ENCODE measurements at regions of chr17 and their contacts with region 1.

Region 1: GRCh38 chr17:43673516-43674323 is 12.0 kb upstream of the MEOX1 start:
- DNase-seq: peak; percentile 76
- H3K4me3 ChIP-seq: no peak overlapping the region
- H3K27ac ChIP-seq: no peak overlapping the region
- H3K4me1 ChIP-seq: peaks cover 21% of the 10 kb centered on the region
- H3K27me3 ChIP-seq: no peaks in the 10 kb centered on the region
- CTCF ChIP-seq: peak; percentile 98

Region 2: DNA sequence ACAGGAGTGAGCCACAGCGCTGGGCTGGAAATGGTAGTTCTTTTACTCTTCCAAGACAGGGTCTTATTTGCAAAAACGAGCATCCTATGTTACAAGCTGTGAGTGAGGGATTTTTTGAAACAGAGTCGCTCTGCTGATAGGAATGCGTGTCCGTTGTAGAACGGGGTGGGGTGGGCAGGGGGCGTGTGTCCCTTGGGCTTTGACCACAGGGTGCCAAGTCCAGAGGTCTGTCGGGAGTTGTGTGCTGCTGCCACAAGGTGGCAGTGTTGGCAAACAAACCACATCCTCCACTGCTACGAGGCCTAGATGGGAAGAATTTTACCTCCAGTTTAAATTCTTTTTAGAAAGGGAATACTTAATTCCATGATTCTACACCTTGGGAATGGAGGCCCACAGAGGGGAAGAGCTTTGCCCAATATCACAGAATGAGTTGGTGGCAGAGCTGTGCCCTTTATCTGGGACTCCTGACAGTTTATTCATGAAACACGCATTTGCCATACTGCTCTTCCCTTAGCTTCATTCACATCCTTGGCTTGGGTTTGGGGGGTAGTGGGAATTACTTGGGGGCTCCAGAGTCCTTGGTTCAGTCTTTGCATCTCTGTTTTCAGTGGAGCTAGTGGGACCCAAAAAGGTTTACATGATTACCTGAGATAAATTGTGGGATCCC is 97.0 kb before region 1 on chr17:
- intact Hi-C with region 1: loop called (anchors 2 kb)
- DNase-seq: peak; percentile 62
- H3K4me3 ChIP-seq: no peak overlapping the region
- H3K27ac ChIP-seq: no peak overlapping the region
- H3K4me1 ChIP-seq: peaks cover 50% of the 10 kb centered on the region
- H3K27me3 ChIP-seq: no peaks in the 10 kb centered on the region
- CTCF ChIP-seq: peak; percentile 95

Region 3: DNA sequence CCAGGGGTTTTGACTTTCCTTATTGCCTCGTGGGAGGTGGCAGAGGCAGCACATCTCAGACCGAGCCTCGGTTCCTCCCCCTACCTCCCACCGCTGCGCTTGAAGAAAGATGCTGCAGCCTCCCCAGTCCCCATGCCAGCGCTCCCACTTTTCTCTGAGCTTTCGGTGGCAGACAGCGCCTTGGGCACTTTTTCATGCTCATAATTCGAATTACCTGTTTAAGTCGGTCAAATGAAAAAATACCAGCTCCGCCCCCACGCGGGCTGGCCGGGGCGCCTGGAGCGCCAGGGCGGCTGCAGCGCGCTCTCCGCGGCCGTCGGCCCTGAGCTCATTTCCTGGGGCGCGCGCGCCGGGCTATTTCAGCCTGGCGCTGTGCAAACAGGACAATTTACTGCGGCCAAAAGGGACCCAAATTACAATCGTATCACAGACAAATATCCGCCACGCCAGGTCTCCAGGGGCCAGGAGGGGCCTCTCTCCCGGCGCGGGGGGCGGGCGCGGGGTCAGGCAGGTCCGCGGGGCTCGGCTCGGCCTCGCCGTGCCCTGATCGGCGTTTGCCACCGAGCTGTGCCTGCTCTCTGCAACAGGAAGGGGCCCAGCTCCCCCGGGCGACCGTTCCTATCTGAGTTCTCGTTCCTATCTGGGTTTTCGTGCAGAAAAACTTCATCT is 39.9 kb after region 1 on chr17:
- intact Hi-C with region 1: no loop called
- DNase-seq: peak; percentile 40
- H3K4me3 ChIP-seq: peak overlapping the region; percentile 63
- H3K27ac ChIP-seq: peak overlapping the region; percentile 71
- H3K4me1 ChIP-seq: peaks cover 31% of the 10 kb centered on the region
- H3K27me3 ChIP-seq: no peaks in the 10 kb centered on the region
- CTCF ChIP-seq: peak; percentile 12

Measured in left ventricle myocardium inferior (tissue), 1 donor.